Dendritic cell treated with granulocyte-macrophage colony-stimulating factor and Interleukin-4, amounts not matched to agents 40 ng/mL and 50 ng/mL, for 4 days (primary cell): ENCODE measurements at regions of chrX and their contacts with region 1.

Region 1: GRCh38 chrX:49079489-49080428 is at the start of gene WDR45:
- H3K4me3 Mint-ChIP-seq: peak within 1 kb of the TSS; percentile 87
- H3K27ac Mint-ChIP-seq: peak within 1 kb of the TSS; percentile 93
- H3K4me1 Mint-ChIP-seq: peaks cover 15% of the 10 kb centered on the region
- H3K27me3 Mint-ChIP-seq: no peaks in the 10 kb centered on the region

Region 2: GRCh38 chrX:49100704-49101628 is 21.2 kb after region 1 on chrX:
- intact Hi-C with region 1: loop called (anchors 2 kb)
- H3K4me3 Mint-ChIP-seq: peak overlapping the region; percentile 77
- H3K27ac Mint-ChIP-seq: peak overlapping the region; percentile 81
- H3K4me1 Mint-ChIP-seq: peaks cover 9% of the 10 kb centered on the region
- H3K27me3 Mint-ChIP-seq: no peaks in the 10 kb centered on the region